PC-9 (cell line): ENCODE measurements at regions of chr6 and their contacts with region 1.

Region 1: DNA sequence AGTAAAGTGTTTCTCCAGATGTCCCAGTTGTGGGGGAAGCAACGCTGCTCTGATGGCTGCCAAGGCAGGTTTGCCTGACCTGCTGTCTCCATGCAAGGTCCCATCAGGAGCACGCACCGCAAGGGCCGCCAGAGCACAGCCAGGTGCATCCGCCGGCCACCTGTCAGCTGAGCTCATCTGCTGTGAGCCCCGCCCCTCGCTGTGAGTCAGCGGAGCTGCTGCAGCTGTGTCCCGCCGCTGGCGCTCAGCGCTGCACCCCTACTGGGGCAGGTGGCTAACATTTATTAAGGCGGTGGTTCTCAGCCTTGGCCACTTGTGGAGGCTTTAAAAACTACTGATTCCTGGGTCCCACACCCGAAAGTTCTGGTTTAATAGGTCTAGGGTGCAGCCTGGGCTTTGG is 225.7 kb downstream of the UST start:
- DNase-seq: peak; percentile 66 to 69
- H3K4me3 ChIP-seq: no peak overlapping the region
- H3K27ac ChIP-seq: no peak overlapping the region
- H3K4me1 ChIP-seq: no peaks in the 10 kb centered on the region
- H3K27me3 ChIP-seq: 0 out of 2 replicates have a peak, but pooled peaks cover 6% of the 10 kb centered on the region
- CTCF ChIP-seq: no peak

Region 2: GRCh38 chr6:148800535-148800934 is 171.9 kb before region 1 on chr6:
- CTCF ChIA-PET with region 1: no interaction called
- POLR2A ChIA-PET with region 1: no interaction called
- intact Hi-C with region 1: no loop called
- DNase-seq: no peak
- H3K4me3 ChIP-seq: no peak overlapping the region
- H3K27ac ChIP-seq: no peak overlapping the region
- H3K4me1 ChIP-seq: no peaks in the 10 kb centered on the region
- H3K27me3 ChIP-seq: no peaks in the 10 kb centered on the region
- CTCF ChIP-seq: no peak

Region 3: GRCh38 chr6:149458196-149458595 is 485.7 kb after region 1 on chr6:
- CTCF ChIA-PET with region 1: no interaction called
- POLR2A ChIA-PET with region 1: interaction called, 19 read pairs
- intact Hi-C with region 1: no loop called
- DNase-seq: no peak
- H3K4me3 ChIP-seq: no peak overlapping the region
- H3K27ac ChIP-seq: no peak overlapping the region
- H3K4me1 ChIP-seq: peaks cover 10% of the 10 kb centered on the region
- H3K27me3 ChIP-seq: no peaks in the 10 kb centered on the region
- CTCF ChIP-seq: no peak